ENCODE measurements at regions of chr14 and their contacts with region 1.

Region 1: GRCh38 chr14:67373347-67373746 is 13.2 kb downstream of the EIF2S1 start:
- DNase-seq: no peak
- ATAC-seq: no peak
- H3K4me3 ChIP-seq: no peak overlapping the region
- H3K27ac ChIP-seq: no peak overlapping the region
- H3K4me1 ChIP-seq: peaks cover 2% of the 10 kb centered on the region; the same call in 1 of the 2 replicates
- H3K27me3 ChIP-seq: no peaks in the 10 kb centered on the region
- CTCF ChIP-seq: no peak
- POLR2A ChIP-seq: no peak
- RAD21 ChIP-seq: no peak

Region 2: GRCh38 chr14:67133595-67134441 is 239.5 kb before region 1 on chr14:
- CTCF ChIA-PET with region 1: no interaction called
- POLR2A ChIA-PET with region 1: no interaction called
- dilution Hi-C with region 1: no loop called
- in situ Hi-C with region 1: no loop called
- intact Hi-C with region 1: no loop called
- DNase-seq: peak; percentile 14
- ATAC-seq: no peak
- H3K4me3 ChIP-seq: no peak overlapping the region
- H3K27ac ChIP-seq: no peak overlapping the region
- H3K4me1 ChIP-seq: no peaks in the 10 kb centered on the region
- H3K27me3 ChIP-seq: no peaks in the 10 kb centered on the region
- CTCF ChIP-seq: no peak
- POLR2A ChIP-seq: no peak
- RAD21 ChIP-seq: no peak

Region 3: DNA sequence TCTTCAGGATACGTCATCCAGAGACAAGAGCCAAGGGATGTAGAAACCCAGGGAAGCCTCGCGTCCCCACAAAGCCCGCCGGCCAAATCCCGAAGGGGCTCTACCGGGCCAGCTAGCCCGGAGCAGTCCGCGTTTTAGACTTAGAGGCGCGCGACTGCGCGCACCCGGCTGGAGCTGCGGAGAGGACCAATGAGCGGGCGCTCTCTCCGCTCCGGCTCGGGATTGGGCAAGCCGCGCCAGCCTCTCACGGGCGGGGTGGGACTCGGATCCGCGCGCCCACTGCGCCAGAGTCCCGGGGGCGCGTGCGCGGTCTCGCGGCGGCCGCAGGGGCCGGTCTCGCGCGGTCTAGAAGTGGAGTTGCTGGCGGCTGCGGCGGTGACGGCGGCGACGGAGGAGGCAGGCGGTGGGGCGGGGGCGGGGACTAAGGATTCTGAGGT is 132.4 kb before region 1 on chr14:
- CTCF ChIA-PET with region 1: no interaction called
- POLR2A ChIA-PET with region 1: no interaction called
- dilution Hi-C with region 1: no loop called
- in situ Hi-C with region 1: no loop called
- intact Hi-C with region 1: no loop called
- DNase-seq: peak; percentile 96
- ATAC-seq: peak; percentile 95
- H3K4me3 ChIP-seq: peak overlapping the region; percentile 83
- H3K27ac ChIP-seq: peak overlapping the region; percentile 81; the same call in 1 of the 2 replicates
- H3K4me1 ChIP-seq: peaks cover 4% of the 10 kb centered on the region
- H3K27me3 ChIP-seq: no peaks in the 10 kb centered on the region
- CTCF ChIP-seq: no peak
- POLR2A ChIP-seq: no peak; the same call in 1 of the 2 replicates
- RAD21 ChIP-seq: no peak

Region 4: DNA sequence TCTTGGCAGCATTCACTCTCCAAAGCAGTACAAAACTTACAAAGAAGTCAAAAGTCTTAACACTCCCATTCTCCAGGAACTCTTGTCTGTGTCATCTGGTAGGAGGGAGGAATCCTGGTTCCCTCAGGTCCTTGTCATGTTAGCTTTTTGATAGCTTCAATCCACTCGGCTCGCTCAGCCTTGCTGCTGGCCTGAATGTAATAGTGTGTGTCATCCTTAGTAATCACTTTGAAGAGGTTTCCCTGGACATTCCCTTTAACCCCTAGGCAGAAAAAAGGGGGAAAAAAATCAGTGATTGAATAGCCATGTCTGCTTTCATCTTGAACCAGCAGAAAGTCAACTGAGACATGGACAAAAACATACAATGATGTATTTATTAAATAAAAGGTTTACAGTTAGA is 13.8 kb after region 1 on chr14:
- CTCF ChIA-PET with region 1: no interaction called
- POLR2A ChIA-PET with region 1: no interaction called
- dilution Hi-C with region 1: no loop called
- in situ Hi-C with region 1: no loop called
- intact Hi-C with region 1: loop called (anchors 1 kb)
- DNase-seq: peak; percentile 56
- ATAC-seq: peak; percentile 64
- H3K4me3 ChIP-seq: no peak overlapping the region
- H3K27ac ChIP-seq: no peak overlapping the region
- H3K4me1 ChIP-seq: no peaks in the 10 kb centered on the region
- H3K27me3 ChIP-seq: no peaks in the 10 kb centered on the region
- CTCF ChIP-seq: no peak
- POLR2A ChIP-seq: no peak
- RAD21 ChIP-seq: no peak

Measured in IMR-90 (cell line).